HEK293 (cell line): ENCODE measurements at regions of chr11 and their contacts with region 1.

Region 1: DNA sequence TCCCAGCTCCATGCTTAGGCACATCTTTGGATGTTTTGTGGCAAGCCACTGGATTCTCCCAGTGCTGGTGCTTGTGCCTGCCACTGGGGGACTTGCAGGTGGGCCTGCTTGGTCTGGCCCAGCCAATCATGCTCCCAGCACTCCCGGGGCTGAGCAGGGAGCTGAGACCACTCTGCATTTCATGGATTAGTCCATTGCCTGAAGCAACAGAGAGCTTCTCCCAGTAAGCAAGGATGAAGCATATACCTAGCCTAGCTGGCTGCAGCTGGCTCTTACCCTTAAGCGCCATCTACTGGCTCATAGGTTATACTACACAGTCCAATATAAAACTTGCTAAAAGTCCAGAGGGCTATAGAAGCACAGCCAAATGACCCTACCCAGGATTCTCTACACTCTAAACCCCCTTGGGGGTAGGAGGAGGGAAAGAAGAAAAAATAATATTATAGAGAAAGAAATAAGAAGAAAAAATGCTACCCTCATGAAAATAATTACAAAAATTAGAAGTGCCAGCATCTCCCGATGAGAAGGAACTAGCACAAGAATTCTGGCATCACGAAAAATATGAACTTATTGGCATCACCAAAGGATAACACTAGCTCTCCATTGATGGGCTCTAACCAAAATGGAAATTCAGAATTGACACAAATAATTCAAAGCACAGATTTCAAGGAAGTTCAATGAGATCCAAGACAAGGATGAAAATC is 275.3 kb downstream of the C11orf87 start:
- H3K4me3 ChIP-seq: no peak overlapping the region
- H3K27ac ChIP-seq: no peak overlapping the region
- H3K4me1 ChIP-seq: no peaks in the 10 kb centered on the region
- CTCF ChIP-seq: no peak

Region 2: GRCh38 chr11:108351458-108351857 is 1345.8 kb before region 1 on chr11:
- CTCF ChIA-PET with region 1: interaction called, 10 read pairs
- POLR2A ChIA-PET with region 1: no interaction called
- H3K4me3 ChIP-seq: no peak overlapping the region
- H3K27ac ChIP-seq: no peak overlapping the region
- H3K4me1 ChIP-seq: no peaks in the 10 kb centered on the region
- CTCF ChIP-seq: no peak

Region 3: GRCh38 chr11:109680127-109680526 is 17.2 kb before region 1 on chr11:
- CTCF ChIA-PET with region 1: interaction called, 11 read pairs
- POLR2A ChIA-PET with region 1: no interaction called
- H3K4me3 ChIP-seq: no peak overlapping the region
- H3K27ac ChIP-seq: no peak overlapping the region
- H3K4me1 ChIP-seq: no peaks in the 10 kb centered on the region
- CTCF ChIP-seq: no peak